Esophagus muscularis mucosa (tissue), 4 donors: ENCODE measurements at regions of chr7 and their contacts with region 1.

Region 1: DNA sequence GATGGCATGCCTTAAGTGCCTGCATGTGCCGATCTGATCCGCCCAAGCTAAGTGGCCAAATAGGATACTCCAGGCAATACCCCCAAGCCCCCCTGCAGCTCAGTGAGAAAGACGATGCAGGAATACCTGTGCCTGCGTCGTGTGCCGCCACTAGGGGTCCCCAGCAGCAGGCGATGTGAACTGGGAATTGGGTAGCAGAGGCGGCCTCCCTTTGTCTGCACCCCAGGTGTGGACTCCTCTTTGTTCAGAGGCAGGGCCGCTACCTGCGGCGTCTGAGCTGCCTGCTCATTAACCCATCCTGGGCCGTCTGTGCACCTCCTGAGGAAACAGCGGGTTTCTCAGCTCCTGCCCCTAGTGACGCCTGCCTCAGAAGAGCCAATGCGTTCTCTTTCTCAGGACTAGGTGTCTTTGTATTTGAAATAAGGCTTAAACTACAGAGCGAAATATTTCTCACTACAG is 4.8 kb upstream of the CHN2 start:
- DNase-seq: peak; percentile 90
- H3K4me3 ChIP-seq: no peak overlapping the region
- H3K27ac ChIP-seq: no peak overlapping the region
- H3K4me1 ChIP-seq: peaks cover 9 to 21% (median 14%) of the 10 kb centered on the region in 4 donors
- H3K27me3 ChIP-seq: peaks cover 0 to 44% (median 2%) of the 10 kb centered on the region in 4 donors
- CTCF ChIP-seq: peak; percentile 54 to 80 (median 59)
- EP300 ChIP-seq: no peak
- POLR2A ChIP-seq: no peak

Region 2: GRCh38 chr7:29057046-29057445 is 132.7 kb before region 1 on chr7:
- intact Hi-C with region 1: no loop called
- DNase-seq: no peak
- H3K4me3 ChIP-seq: no peak overlapping the region
- H3K27ac ChIP-seq: no peak overlapping the region
- H3K4me1 ChIP-seq: no peaks in the 10 kb centered on the region
- H3K27me3 ChIP-seq: no peaks in the 10 kb centered on the region
- CTCF ChIP-seq: no peak
- EP300 ChIP-seq: no peak
- POLR2A ChIP-seq: no peak

Region 3: DNA sequence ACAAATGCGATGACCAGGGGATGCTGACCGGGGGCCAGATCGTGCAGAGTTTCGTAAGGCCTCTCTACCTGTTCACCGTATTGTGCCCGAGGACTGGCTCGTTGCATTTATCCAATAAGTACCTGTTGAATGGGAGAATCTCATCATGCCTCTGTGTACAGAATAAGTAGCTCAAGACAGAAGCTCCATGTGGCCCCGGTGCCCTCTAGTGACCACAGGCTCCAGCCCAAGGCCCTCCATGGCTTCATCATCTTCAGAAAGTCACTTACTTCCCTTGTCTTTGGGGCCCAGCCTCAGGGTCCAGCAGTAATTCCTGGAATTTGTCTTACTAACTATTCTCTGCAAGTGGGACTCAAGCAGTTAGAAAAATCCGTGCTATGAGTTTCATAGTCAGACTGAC is 155.8 kb after region 1 on chr7:
- intact Hi-C with region 1: loop called (anchors 5 kb)
- DNase-seq: no peak
- H3K4me3 ChIP-seq: no peak overlapping the region
- H3K27ac ChIP-seq: no peak overlapping the region
- H3K4me1 ChIP-seq: peaks cover 0 to 7% (median 3%) of the 10 kb centered on the region in 4 donors
- H3K27me3 ChIP-seq: no peaks in the 10 kb centered on the region
- CTCF ChIP-seq: peak in 1 of 3 experiments; percentile 30
- EP300 ChIP-seq: no peak
- POLR2A ChIP-seq: no peak